ENCODE measurements at regions of chr15 and their contacts with region 1.

Region 1: GRCh38 chr15:90818251-90819210 is 49.9 kb upstream of the FURIN start:
- DNase-seq: peak in 5 of 9 experiments; percentile 27 to 60 (median 41)
- ATAC-seq: peak; percentile 64
- H3K4me3 ChIP-seq: no peak overlapping the region
- H3K4me3 Mint-ChIP-seq: peak overlapping the region; percentile 37
- H3K27ac ChIP-seq: no peak overlapping the region
- H3K27ac Mint-ChIP-seq: no peak overlapping the region
- H3K4me1 ChIP-seq: peaks cover 21% of the 10 kb centered on the region
- H3K4me1 Mint-ChIP-seq: peaks cover 36% of the 10 kb centered on the region
- H3K27me3 ChIP-seq: no peaks in the 10 kb centered on the region
- H3K27me3 Mint-ChIP-seq: no peaks in the 10 kb centered on the region
- CTCF ChIP-seq: peak; percentile 41

Region 2: DNA sequence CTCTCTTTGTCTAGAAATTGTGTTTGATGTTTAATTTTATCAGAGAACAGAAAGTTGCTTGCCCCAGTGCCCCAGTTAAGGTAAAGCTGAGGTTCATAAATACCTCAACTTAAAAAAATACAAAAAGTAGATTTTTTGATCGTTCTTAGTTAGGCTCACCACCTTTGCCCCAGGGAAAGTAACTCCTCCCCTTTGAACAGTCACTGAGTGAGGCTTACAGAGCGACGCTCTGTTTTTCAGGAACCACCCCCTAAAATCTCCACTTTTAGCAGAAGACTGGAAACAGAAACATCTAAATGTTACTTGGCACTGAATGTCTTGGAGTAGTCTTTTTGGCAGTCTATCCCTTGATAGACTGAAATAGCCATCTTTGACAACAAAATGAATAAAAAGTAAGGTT is 76.4 kb before region 1 on chr15:
- CTCF ChIA-PET with region 1: no interaction called
- POLR2A ChIA-PET with region 1: no interaction called
- intact Hi-C with region 1: no loop called
- DNase-seq: peak in 1 of 9 experiments; percentile 10
- ATAC-seq: no peak
- H3K4me3 ChIP-seq: no peak overlapping the region
- H3K4me3 Mint-ChIP-seq: no peak overlapping the region
- H3K27ac ChIP-seq: no peak overlapping the region
- H3K27ac Mint-ChIP-seq: no peak overlapping the region
- H3K4me1 ChIP-seq: no peaks in the 10 kb centered on the region
- H3K4me1 Mint-ChIP-seq: peaks cover 6% of the 10 kb centered on the region
- H3K27me3 ChIP-seq: no peaks in the 10 kb centered on the region
- H3K27me3 Mint-ChIP-seq: no peaks in the 10 kb centered on the region
- CTCF ChIP-seq: no peak

Region 3: DNA sequence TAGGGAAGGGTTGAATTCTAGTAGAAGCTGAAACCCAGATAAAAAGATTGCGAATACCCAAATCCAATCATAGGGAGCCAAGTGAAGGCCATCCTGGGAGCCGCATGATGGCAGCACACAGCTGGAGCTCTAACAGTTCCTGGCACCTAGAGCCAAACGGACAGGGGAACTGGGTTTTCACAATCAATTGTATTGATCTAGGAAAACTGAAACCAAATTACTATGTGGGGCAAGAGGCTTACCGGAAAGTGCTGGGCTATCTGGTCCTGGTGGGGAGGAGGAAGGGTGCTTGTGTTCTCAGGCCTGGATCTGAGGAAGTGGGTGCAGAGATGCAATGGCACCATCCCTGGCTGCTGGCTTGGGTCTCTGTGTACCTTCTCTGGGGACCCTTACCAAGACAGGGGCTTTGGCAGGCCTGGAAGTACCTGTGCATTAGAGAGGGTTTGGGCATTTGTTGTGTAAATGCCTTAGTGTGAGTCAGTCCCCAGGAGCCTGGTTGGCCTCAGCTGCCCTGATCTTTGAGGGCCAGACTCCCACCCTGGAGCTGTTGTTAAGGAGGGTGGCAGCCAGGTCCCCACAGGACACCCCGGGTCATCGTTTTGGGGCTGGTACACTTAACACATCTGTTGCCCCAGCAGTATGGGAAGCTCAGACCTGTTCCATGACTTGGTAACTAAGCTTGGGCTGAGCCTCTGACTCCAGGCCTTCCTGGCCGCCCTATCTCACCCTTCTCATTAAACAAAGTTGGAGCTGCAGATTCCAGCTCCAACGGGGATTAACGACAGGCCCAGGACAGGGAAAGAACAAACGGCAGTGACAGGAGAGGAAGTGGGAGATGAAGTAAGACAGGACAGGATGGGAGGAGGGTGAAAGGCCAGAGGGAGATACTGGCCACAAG is 41.0 kb after region 1 on chr15:
- CTCF ChIA-PET with region 1: no interaction called
- POLR2A ChIA-PET with region 1: no interaction called
- intact Hi-C with region 1: loop called in 1 of 2 experiments (anchors 5 kb)
- DNase-seq: no peak
- ATAC-seq: no peak
- H3K4me3 ChIP-seq: no peak overlapping the region
- H3K4me3 Mint-ChIP-seq: no peak overlapping the region
- H3K27ac ChIP-seq: no peak overlapping the region
- H3K27ac Mint-ChIP-seq: no peak overlapping the region
- H3K4me1 ChIP-seq: peaks cover 24% of the 10 kb centered on the region
- H3K4me1 Mint-ChIP-seq: peaks cover 32% of the 10 kb centered on the region
- H3K27me3 ChIP-seq: no peaks in the 10 kb centered on the region
- H3K27me3 Mint-ChIP-seq: no peaks in the 10 kb centered on the region
- CTCF ChIP-seq: no peak